ENCODE measurements at regions of chr16 and their contacts with region 1.

Region 1: GRCh38 chr16:22898874-22899348 is 84.9 kb downstream of the HS3ST2 start:
- DNase-seq: peak; percentile 72 to 87 (median 81)
- ATAC-seq: peak; percentile 70 to 96 (median 90)
- H3K4me3 ChIP-seq: no peak overlapping the region
- H3K27ac ChIP-seq: peak overlapping the region in 3 of 12 donors; percentile 7 to 61 (median 52)
- H3K4me1 ChIP-seq: peaks cover 0 to 19% (median 8%) of the 10 kb centered on the region in 12 donors
- H3K27me3 ChIP-seq: peaks cover 0 to 38% (median 18%) of the 10 kb centered on the region in 9 donors
- CTCF ChIP-seq: peak; percentile 75 to 95 (median 88)
- POLR2A ChIP-seq: no peak

Region 2: DNA sequence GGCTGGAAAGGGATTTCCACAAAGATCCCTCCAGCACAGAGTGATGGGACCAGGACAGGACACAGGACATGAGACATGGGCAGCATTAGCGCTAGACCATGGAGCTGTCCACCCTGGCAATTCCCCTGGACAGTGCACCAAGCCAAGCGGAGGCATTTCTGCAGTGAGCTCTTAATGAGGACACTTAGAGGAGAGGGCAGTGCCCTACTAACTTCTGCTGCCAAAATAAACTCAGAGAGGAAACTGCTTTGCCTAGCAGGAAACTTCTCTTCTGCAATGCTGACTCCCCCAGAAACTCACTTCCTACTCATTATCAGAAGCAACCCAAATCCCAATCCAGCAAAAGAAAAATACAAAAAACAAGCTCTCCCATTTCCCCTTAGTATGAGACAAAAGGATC is 34.3 kb after region 1 on chr16:
- intact Hi-C with region 1: loop called in 1 of 10 experiments (anchors 5 kb)
- DNase-seq: peak in 3 of 5 donors; percentile 10 to 30 (median 17)
- ATAC-seq: peak; percentile 37 to 77 (median 70)
- H3K4me3 ChIP-seq: no peak overlapping the region
- H3K27ac ChIP-seq: no peak overlapping the region
- H3K4me1 ChIP-seq: peaks cover 0 to 18% (median 8%) of the 10 kb centered on the region in 12 donors
- H3K27me3 ChIP-seq: peaks cover 0 to 33% (median 0%) of the 10 kb centered on the region in 9 donors
- CTCF ChIP-seq: no peak
- POLR2A ChIP-seq: no peak

Region 3: DNA sequence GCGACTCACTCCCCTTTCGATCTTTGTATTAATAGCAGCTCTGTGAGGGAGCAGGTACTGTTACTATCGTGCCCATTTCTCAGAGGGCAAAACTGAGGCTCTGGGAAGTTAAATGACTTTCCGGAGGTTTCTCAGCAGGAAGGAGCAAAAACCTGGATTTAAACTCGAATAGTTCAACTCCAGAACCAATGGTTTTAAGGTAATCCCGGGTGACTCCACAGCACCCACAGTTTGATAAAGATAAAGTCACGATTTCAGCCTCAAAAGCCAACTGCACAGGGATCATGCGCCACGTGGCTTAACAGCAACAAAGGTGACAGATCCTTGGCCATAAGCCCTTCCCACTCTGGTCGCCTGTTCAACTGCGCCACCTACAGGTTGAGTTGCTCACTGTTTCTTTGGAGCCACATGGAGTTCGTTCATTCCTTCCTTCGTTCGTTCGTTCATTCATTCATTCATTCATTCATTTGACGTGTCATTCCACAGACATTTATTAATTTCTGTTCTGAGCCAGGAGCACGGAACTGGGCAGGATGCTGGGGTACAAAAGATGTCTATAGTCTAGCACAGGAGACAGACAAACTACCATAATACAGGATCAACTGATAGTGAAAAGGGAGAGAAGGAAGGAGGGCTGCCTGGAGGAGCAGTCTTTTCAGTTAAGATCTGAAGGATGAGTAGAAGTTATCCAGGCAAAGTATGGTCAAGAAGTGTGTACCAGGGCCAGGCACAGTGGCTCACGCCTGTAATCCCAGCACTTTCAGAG is 49.9 kb after region 1 on chr16:
- intact Hi-C with region 1: loop called in 8 of 10 experiments (anchors 1 to 10 kb)
- DNase-seq: peak in 4 of 5 donors; percentile 41 to 62 (median 56)
- ATAC-seq: peak; percentile 71 to 84 (median 78)
- H3K4me3 ChIP-seq: peak overlapping the region in 9 of 12 donors; percentile 9 to 41 (median 23)
- H3K27ac ChIP-seq: no peak overlapping the region
- H3K4me1 ChIP-seq: peaks cover 0 to 13% (median 9%) of the 10 kb centered on the region in 12 donors
- H3K27me3 ChIP-seq: peaks cover 0 to 35% (median 16%) of the 10 kb centered on the region in 9 donors
- CTCF ChIP-seq: peak; percentile 60 to 87 (median 74)
- POLR2A ChIP-seq: no peak

Region 4: GRCh38 chr16:22977294-22977697 is 78.4 kb after region 1 on chr16:
- intact Hi-C with region 1: loop called in 3 of 10 experiments (anchors 5 kb)
- DNase-seq: no peak
- ATAC-seq: no peak
- H3K4me3 ChIP-seq: no peak overlapping the region
- H3K27ac ChIP-seq: no peak overlapping the region
- H3K4me1 ChIP-seq: no peaks in the 10 kb centered on the region
- H3K27me3 ChIP-seq: peaks cover 0 to 21% (median 0%) of the 10 kb centered on the region in 9 donors
- CTCF ChIP-seq: peak in 10 of 12 donors; percentile 20 to 61 (median 38)
- POLR2A ChIP-seq: no peak

Region 5: DNA sequence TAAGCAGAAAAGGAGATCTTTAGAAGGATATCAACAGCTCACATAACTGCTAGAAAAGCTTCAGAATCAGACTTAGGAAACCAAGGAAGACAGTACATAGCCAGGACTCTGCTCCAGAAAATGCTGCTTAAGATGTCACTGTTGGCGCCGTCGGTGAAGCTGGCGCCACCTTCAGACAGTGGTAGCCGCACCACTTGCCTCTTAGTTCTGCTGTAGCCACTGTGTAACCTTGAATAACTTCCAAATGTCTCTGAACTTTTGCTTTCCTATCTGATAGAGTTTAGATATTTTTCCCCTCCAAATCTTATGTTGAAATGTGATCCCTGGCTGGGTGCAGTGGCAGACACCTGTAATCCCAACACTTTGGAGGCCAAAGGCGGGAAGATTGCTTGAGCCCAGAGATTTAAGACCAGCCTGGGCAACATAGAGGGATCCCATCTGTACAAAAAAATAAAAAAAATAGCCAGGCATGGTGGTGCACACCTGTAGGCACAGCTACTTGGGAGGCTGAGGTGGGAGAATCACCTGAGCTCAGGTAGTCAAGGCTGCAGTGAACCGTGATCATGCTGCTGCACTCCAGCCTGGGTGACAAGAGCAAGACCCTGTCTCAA is 256.6 kb after region 1 on chr16:
- intact Hi-C with region 1: loop called in 4 of 10 experiments (anchors 10 kb)
- DNase-seq: peak in 1 of 5 donors; percentile 62
- ATAC-seq: peak; percentile 53 to 72 (median 58)
- H3K4me3 ChIP-seq: no peak overlapping the region
- H3K27ac ChIP-seq: no peak overlapping the region
- H3K4me1 ChIP-seq: no peaks in the 10 kb centered on the region
- H3K27me3 ChIP-seq: no peaks in the 10 kb centered on the region
- CTCF ChIP-seq: peak in 9 of 12 donors; percentile 6 to 53 (median 20)
- POLR2A ChIP-seq: no peak

Region 6: GRCh38 chr16:23435500-23435899 is 536.6 kb after region 1 on chr16:
- intact Hi-C with region 1: loop called in 8 of 10 experiments (anchors 2 to 10 kb)
- DNase-seq: peak in 4 of 5 donors; percentile 21 to 71 (median 36)
- ATAC-seq: peak; percentile 58 to 82 (median 76)
- H3K4me3 ChIP-seq: no peak overlapping the region
- H3K27ac ChIP-seq: peak overlapping the region in 1 of 12 donors; percentile 33
- H3K4me1 ChIP-seq: peaks cover 0 to 12% (median 0%) of the 10 kb centered on the region in 12 donors
- H3K27me3 ChIP-seq: no peaks in the 10 kb centered on the region
- CTCF ChIP-seq: peak; percentile 49 to 88 (median 74)
- POLR2A ChIP-seq: no peak

Measured in heart left ventricle (tissue), 16 donors.